Body of pancreas (tissue), 4 donors: ENCODE measurements at regions of chr2 and their contacts with region 1.

Region 1: DNA sequence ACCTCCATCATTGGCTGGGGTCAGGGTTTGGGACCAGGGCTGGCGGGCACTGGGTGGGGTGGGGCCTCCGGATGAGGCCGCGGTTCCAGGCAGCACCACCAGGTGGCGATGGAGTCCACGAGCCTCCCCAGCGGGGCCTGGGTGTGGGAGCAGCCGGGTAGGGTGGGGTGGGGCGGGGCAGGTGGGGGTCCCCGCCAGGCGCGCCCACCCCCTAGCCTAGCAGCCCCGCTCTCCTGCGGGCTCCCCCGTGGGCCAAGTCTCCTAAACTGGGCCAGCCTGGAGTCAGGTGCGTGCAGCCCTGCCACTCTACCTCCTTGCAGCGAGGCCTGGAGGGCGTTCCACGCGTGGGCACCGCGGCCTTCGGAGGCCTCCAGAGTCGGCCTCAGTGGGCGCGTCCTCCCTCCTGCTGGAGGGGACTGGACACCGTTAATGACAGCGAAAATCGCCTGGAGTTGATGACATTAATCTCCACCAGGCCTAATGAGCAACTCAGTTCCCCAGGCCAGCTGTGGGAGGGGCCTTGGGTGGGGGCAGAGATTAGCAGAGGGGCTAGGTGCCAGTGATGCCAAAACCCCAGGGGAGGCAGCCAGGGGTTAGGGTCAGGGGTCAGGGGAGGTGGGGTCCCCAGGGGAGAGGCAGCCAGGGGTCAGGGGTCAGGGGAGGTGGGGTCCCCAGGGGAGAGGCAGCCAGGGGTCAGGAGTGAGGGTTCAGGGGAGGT is 187.6 kb downstream of the TWIST2 start:
- DNase-seq: peak; percentile 15 to 58 (median 45)
- ATAC-seq: peak; percentile 68
- H3K4me3 ChIP-seq: no peak overlapping the region
- H3K27ac ChIP-seq: no peak overlapping the region
- H3K4me1 ChIP-seq: no peaks in the 10 kb centered on the region
- H3K27me3 ChIP-seq: no peaks in the 10 kb centered on the region
- CTCF ChIP-seq: peak; percentile 47 to 94 (median 64)
- POLR2A ChIP-seq: no peak

Region 2: GRCh38 chr2:239401067-239401880 is 365.8 kb after region 1 on chr2:
- intact Hi-C with region 1: no loop called
- DNase-seq: peak; percentile 99 to 100 (median 100)
- ATAC-seq: peak; percentile 92
- H3K4me3 ChIP-seq: peak overlapping the region; percentile 27 to 59
- H3K27ac ChIP-seq: peak overlapping the region; percentile 98 to 100 (median 99)
- H3K4me1 ChIP-seq: peaks cover 26% of the 10 kb centered on the region
- H3K27me3 ChIP-seq: no peaks in the 10 kb centered on the region
- CTCF ChIP-seq: peak in 1 of 7 experiments; percentile 12
- POLR2A ChIP-seq: peak; percentile 95 to 98 (median 97)

Region 3: DNA sequence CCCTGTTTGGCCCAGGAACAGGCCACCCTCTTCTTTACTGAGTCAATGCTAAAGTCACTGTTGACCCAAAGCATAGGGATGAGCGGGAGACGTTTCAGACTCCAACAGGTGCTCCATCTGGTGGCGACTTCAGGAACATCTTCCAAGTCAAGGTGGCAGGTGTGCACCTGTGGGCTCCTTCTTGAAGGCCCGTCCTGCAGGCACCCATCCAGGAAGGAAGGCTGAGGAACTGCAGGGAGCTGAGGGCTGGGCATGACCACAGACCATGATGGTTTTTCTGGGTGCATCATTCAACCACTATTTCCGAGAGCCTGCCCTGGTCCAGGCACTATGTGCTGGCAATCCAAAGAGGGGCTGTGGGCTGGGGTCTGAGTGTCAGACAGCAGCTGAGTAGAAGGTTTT is 846.8 kb after region 1 on chr2:
- intact Hi-C with region 1: loop called (anchors 5 kb)
- DNase-seq: peak; percentile 55 to 68 (median 58)
- ATAC-seq: peak; percentile 52
- H3K4me3 ChIP-seq: no peak overlapping the region
- H3K27ac ChIP-seq: no peak overlapping the region
- H3K4me1 ChIP-seq: no peaks in the 10 kb centered on the region
- H3K27me3 ChIP-seq: no peaks in the 10 kb centered on the region
- CTCF ChIP-seq: peak; percentile 43 to 60 (median 52)
- POLR2A ChIP-seq: no peak